Heart right ventricle (tissue), 16 donors: ENCODE measurements at regions of chr2 and their contacts with region 1.

Region 1: GRCh38 chr2:216632952-216633615 is at the start of gene IGFBP2:
- DNase-seq: peak; percentile 48 to 61
- ATAC-seq: peak; percentile 41 to 76 (median 60)
- H3K4me3 ChIP-seq: peak within 1 kb of the TSS; percentile 56 to 81 (median 68)
- H3K27ac ChIP-seq: peak within 1 kb of the TSS in 8 of 10 donors; percentile 10 to 74 (median 56)
- H3K4me1 ChIP-seq: peaks cover 0 to 51% (median 30%) of the 10 kb centered on the region in 9 donors
- H3K27me3 ChIP-seq: peaks cover 0 to 42% (median 0%) of the 10 kb centered on the region in 7 donors
- CTCF ChIP-seq: no peak
- total RNA-seq, gene IGFBP2: 26.0 to 361 (median 109) TPM

Region 2: GRCh38 chr2:216535454-216535995 is 97.6 kb before region 1 on chr2:
- intact Hi-C with region 1: loop called in 1 of 10 experiments (anchors 5 kb)
- DNase-seq: peak; percentile 67 to 78
- ATAC-seq: peak; percentile 72 to 92 (median 82)
- H3K4me3 ChIP-seq: peak overlapping the region in 4 of 10 donors; percentile 1 to 14 (median 6)
- H3K27ac ChIP-seq: peak overlapping the region; percentile 65 to 91 (median 84)
- H3K4me1 ChIP-seq: peaks cover 21 to 76% (median 60%) of the 10 kb centered on the region in 9 donors
- H3K27me3 ChIP-seq: no peaks in the 10 kb centered on the region
- CTCF ChIP-seq: no peak

Region 3: DNA sequence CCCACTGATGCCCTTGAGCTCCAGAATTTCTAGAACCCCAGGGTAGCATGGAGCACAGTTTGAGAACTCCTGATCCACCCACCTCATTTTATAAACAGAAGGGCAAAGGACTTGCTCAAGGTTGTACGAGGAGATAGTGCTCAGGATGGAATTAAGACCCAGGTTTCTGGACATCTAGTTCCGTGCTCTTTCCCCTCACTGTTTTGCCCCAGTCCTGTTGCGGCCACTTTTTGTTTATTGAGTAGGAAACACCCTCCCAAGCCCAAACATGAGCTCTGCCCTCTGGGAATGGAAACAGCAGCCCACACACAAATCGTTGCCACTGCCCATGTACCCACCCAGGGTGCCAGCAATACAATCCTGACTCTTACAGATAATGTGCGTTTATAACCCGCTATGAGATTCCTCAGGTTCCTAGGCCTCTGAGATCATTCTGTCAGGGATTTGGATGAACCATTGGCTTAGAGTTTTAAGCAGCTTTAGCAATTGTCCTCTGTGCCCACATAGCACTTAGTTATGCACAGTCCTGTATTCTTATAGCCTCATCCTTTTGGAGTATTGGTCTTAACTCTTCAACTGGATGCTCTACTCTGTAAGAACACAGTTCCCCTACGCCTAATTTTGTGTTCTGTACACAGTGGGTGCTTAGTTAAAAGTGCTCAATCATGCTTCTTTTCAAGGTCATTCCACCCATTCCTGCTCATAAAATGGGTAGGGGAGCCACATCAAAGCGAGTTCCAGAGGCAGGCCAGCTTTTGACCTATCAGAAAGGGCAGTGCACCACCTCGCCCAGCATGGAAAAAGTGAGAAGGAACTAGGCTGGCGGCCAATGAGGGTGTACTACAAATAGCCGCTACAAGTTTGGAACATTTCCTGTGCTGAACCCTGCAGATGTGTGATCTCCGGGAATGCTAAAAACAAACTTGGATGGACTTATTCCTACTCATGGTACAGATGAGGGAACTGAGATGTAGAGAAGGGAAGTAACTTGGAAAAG is 60.2 kb before region 1 on chr2:
- intact Hi-C with region 1: loop called in 1 of 10 experiments (anchors 10 kb)
- DNase-seq: peak; percentile 78 to 94
- ATAC-seq: peak; percentile 88 to 97 (median 96)
- H3K4me3 ChIP-seq: no peak overlapping the region
- H3K27ac ChIP-seq: peak overlapping the region; percentile 63 to 89 (median 86)
- H3K4me1 ChIP-seq: peaks cover 5 to 35% (median 25%) of the 10 kb centered on the region in 9 donors
- H3K27me3 ChIP-seq: no peaks in the 10 kb centered on the region
- CTCF ChIP-seq: no peak

Region 4: DNA sequence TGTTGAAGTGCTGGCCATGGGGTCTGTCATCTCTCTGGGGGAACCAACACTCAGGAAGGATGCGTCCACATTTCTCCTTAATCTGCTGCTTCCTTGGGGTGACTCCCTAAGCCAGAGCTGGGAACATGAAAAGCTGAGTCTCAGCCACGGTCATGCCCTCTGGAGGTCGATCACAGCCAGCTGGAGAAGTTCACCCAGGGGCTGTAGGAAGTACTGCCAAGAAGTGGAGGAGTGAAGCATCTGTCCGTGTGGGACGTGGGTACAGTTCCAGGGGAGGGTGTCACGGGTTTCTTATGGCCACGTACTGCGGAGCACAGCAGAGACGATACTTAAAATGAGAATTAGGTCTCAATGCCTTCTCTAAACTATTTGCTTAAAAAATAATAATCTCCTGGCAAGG is 42.3 kb before region 1 on chr2:
- intact Hi-C with region 1: loop called in 1 of 10 experiments (anchors 5 kb)
- DNase-seq: peak; percentile 23 to 43
- ATAC-seq: peak; percentile 45 to 94 (median 68)
- H3K4me3 ChIP-seq: no peak overlapping the region
- H3K27ac ChIP-seq: peak overlapping the region in 3 of 10 donors; percentile 1 to 41 (median 33)
- H3K4me1 ChIP-seq: peaks cover 2 to 25% (median 15%) of the 10 kb centered on the region in 9 donors
- H3K27me3 ChIP-seq: no peaks in the 10 kb centered on the region
- CTCF ChIP-seq: peak in 4 of 9 donors; percentile 13 to 36 (median 32)

Region 5: GRCh38 chr2:216687646-216688045 is 54.6 kb after region 1 on chr2:
- intact Hi-C with region 1: no loop called
- DNase-seq: no peak
- ATAC-seq: no peak
- H3K4me3 ChIP-seq: no peak overlapping the region
- H3K27ac ChIP-seq: peak overlapping the region in 1 of 10 donors; percentile 2
- H3K4me1 ChIP-seq: peaks cover 11 to 90% (median 62%) of the 10 kb centered on the region in 9 donors
- H3K27me3 ChIP-seq: peaks cover 0 to 49% (median 0%) of the 10 kb centered on the region in 7 donors
- CTCF ChIP-seq: peak in 7 of 9 donors; percentile 8 to 41 (median 29)